Activated T-helper 1 cell treated with anti-CD3 and anti-CD28 coated beads, Interleukin-12 subunit alpha, Interleukin-12 subunit beta, Interleukin-2, Interleukin-4 antibody, amounts not matched to agents 30 ng/mL and 10 ng/mL and 1 ng/mL, durations not matched to agents 14 hours and 24 hours and 36 hours (primary cell): ENCODE measurements at regions of chr6 and their contacts with region 1.

Region 1: DNA sequence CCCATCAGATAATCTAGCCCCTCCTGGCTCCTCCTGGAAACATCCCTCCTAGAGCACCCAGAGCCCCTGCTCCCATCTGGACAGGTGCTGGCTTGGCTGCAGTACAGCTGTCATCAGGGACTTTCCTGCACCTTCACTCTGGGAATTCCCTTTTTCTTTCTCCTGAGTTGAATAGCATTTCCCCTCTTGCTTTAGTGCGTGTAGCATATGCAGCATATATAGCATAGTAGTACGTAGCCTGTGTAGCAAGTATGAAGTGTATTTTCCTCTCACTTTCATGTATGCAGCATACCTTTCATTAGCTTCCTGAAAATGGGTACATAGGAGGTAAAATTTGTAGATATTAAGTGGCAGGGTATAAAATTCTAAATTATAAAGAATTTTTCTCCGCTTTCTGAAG is 352.9 kb downstream of the ESR1 start:
- DNase-seq: no peak
- H3K4me3 Mint-ChIP-seq: no peak overlapping the region
- H3K27ac Mint-ChIP-seq: peak overlapping the region; percentile 82
- H3K4me1 Mint-ChIP-seq: peaks cover 22% of the 10 kb centered on the region
- H3K27me3 Mint-ChIP-seq: no peaks in the 10 kb centered on the region

Region 2: DNA sequence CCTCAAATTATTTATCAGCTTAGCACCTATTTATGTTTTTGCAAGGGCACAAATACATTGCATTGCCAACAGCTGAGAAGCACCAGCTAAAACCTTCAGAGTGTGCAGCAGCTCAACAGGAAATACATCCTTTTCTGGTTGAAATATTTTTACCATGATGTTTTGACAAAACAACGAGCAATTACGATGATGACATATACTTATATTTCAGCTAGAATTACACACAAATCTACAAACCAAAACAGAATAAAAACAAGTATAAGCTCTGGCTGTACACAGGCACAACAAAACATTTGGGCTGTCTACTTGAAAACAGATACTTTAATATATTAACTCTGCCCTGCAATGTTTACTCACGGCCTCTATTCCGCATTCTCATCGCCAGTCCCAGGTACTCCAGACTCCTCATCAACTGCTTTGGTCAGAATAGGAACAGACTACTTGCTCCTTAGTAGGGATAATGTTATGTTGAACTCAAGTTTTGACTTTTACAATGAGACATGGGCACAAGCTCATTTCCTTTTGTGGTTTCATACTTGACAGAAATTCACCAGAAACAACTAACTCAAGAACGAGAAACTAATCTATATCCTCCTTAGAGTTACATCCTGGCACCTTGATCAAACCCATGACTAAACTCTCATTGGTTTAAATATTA is 24.7 kb after region 1 on chr6:
- intact Hi-C with region 1: loop called (anchors 1 kb)
- DNase-seq: peak; percentile 10
- H3K4me3 Mint-ChIP-seq: peak overlapping the region; percentile 88
- H3K27ac Mint-ChIP-seq: peak overlapping the region; percentile 97
- H3K4me1 Mint-ChIP-seq: peaks cover 66% of the 10 kb centered on the region
- H3K27me3 Mint-ChIP-seq: no peaks in the 10 kb centered on the region